T-cell (primary cell): ENCODE measurements at regions of chr19 and their contacts with region 1.

Region 1: GRCh38 chr19:5714819-5715218 is 5.1 kb downstream of the LONP1 start:
- DNase-seq: no peak
- ATAC-seq: no peak
- H3K4me3 ChIP-seq: no peak overlapping the region
- H3K4me3 Mint-ChIP-seq: no peak overlapping the region
- H3K27ac ChIP-seq: no peak overlapping the region
- H3K27ac Mint-ChIP-seq: no peak overlapping the region
- H3K4me1 ChIP-seq: peaks cover 10 to 27% of the 10 kb centered on the region in 2 experiments
- H3K4me1 Mint-ChIP-seq: peaks cover 18 to 29% (median 29%) of the 10 kb centered on the region in 3 donors
- H3K27me3 ChIP-seq: no peaks in the 10 kb centered on the region
- H3K27me3 Mint-ChIP-seq: no peaks in the 10 kb centered on the region

Region 2: DNA sequence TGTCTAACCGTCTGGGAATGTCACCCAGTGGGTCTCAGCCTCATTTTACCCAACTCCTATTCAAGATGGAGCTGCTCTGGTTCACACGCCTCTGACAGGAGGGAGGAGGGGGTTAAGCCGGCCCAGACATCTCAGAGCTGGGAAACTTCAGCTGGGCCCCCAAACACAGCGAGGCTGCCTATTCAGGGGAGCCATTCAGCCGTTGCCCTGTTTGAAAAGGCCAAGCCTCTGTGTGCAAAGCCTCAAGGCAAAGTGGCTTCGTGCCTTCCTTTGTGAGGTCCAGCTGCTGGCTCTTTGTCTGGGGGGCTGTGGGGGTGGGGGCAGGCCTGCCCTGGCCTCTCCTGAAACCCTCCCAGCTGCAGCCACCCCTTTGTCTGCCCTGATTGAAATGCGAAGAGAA is 521.6 kb before region 1 on chr19:
- CTCF ChIA-PET with region 1: no interaction called
- POLR2A ChIA-PET with region 1: no interaction called
- DNase-seq: no peak
- ATAC-seq: no peak
- H3K4me3 ChIP-seq: no peak overlapping the region
- H3K4me3 Mint-ChIP-seq: no peak overlapping the region
- H3K27ac ChIP-seq: no peak overlapping the region
- H3K27ac Mint-ChIP-seq: no peak overlapping the region
- H3K4me1 ChIP-seq: no peaks in the 10 kb centered on the region
- H3K4me1 Mint-ChIP-seq: peaks cover 0 to 2% (median 0%) of the 10 kb centered on the region in 3 donors
- H3K27me3 ChIP-seq: peaks cover 0 to 22% of the 10 kb centered on the region in 2 experiments
- H3K27me3 Mint-ChIP-seq: peaks cover 0 to 8% of the 10 kb centered on the region in 2 donors

Region 3: DNA sequence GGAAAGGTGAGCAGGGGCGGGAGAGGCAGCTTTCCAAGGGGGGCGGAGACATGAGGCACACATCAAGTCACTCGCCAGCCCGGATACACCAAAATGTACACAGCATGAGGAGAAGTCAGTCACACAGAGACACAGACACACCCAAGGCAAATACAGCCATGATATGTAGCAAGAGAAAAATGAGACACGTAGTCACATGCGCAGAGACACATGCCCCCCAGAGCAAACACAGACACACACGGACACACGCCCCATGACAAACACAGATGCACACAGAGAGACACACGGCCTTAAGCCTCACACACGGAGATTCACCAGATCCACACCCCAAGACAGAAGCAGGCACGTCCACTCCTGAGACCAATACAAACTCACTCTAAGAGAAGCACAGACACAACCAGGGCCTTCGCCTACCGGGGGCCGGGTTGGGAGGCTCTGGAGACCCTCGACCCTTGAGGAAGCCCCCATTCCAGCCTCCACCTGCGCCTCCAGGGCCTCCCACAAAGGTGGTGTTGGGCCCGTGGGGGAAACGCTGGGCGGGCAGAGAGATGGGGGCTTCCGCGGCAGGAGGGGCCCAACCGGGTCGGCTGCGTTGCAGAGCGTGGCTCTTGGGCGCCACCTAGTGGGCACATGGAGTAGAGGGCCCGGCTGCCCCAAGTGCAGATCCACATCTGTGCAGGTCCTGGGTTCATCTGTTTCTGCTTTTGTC is 136.9 kb before region 1 on chr19:
- CTCF ChIA-PET with region 1: no interaction called
- POLR2A ChIA-PET with region 1: no interaction called
- DNase-seq: peak; percentile 11 to 85 (median 61)
- ATAC-seq: peak; percentile 78 to 85 (median 83)
- H3K4me3 ChIP-seq: no peak overlapping the region
- H3K4me3 Mint-ChIP-seq: peak overlapping the region in 1 of 3 donors; percentile 8
- H3K27ac ChIP-seq: no peak overlapping the region
- H3K27ac Mint-ChIP-seq: no peak overlapping the region
- H3K4me1 ChIP-seq: peaks cover 0 to 8% of the 10 kb centered on the region in 2 experiments
- H3K4me1 Mint-ChIP-seq: peaks cover 7 to 10% (median 9%) of the 10 kb centered on the region in 3 donors
- H3K27me3 ChIP-seq: no peaks in the 10 kb centered on the region
- H3K27me3 Mint-ChIP-seq: no peaks in the 10 kb centered on the region

Region 4: GRCh38 chr19:5827891-5828660 is 113.3 kb after region 1 on chr19:
- CTCF ChIA-PET with region 1: no interaction called
- POLR2A ChIA-PET with region 1: no interaction called
- DNase-seq: peak; percentile 80 to 97 (median 88)
- ATAC-seq: peak; percentile 77 to 84 (median 82)
- H3K4me3 ChIP-seq: peak overlapping the region; percentile 78 to 80
- H3K4me3 Mint-ChIP-seq: peak overlapping the region; percentile 96 to 99 (median 96)
- H3K27ac ChIP-seq: peak overlapping the region; percentile 80
- H3K27ac Mint-ChIP-seq: peak overlapping the region; percentile 93 to 100
- H3K4me1 ChIP-seq: peaks cover 6 to 29% of the 10 kb centered on the region in 2 experiments
- H3K4me1 Mint-ChIP-seq: peaks cover 14 to 17% (median 17%) of the 10 kb centered on the region in 3 donors
- H3K27me3 ChIP-seq: peaks cover 0 to 31% of the 10 kb centered on the region in 2 experiments
- H3K27me3 Mint-ChIP-seq: peaks cover 0 to 9% of the 10 kb centered on the region in 2 donors

Region 5: DNA sequence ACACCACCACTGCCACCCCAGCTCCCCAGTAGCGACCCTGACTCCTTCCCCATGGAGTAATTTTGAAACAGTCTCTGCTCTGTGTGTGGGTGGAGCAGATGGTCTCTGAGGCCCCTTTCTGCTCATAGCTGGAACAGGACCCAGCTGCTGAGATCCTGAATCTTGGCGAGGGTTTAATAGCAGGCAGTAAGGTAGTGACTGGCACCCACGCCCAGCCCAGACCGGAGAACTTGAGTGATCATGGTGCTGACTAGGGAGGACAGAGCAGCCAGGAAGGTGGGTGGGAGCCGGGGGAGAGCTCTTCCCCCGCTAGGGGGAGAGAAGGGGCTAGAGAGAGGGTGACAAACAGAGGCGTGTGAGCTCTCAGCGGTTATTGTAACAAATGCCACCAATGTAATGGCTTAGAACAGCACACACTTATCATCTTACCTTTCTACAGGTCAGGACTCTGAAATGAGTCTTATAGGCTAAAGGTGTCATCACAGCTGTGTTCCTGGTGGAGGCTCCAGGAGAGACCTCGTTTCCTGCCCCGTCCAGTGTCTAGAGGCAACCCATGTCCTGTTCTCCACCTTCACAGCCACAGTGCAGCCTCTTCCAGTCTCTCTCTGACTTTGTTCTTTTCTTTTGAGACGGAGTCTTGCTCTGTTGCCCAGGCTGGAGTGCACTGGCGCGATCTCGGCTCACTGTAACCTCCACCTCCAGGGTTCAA is 625.8 kb after region 1 on chr19:
- CTCF ChIA-PET with region 1: no interaction called
- POLR2A ChIA-PET with region 1: interaction called in 1 of 2 experiments, 11 read pairs
- DNase-seq: no peak
- ATAC-seq: no peak
- H3K4me3 ChIP-seq: no peak overlapping the region
- H3K4me3 Mint-ChIP-seq: no peak overlapping the region
- H3K27ac ChIP-seq: no peak overlapping the region
- H3K27ac Mint-ChIP-seq: peak overlapping the region in 1 of 2 donors; percentile 39
- H3K4me1 ChIP-seq: no peaks in the 10 kb centered on the region
- H3K4me1 Mint-ChIP-seq: no peaks in the 10 kb centered on the region
- H3K27me3 ChIP-seq: no peaks in the 10 kb centered on the region
- H3K27me3 Mint-ChIP-seq: no peaks in the 10 kb centered on the region